HCT116 (cell line): ENCODE measurements at regions of chr1 and their contacts with region 1.

Region 1: DNA sequence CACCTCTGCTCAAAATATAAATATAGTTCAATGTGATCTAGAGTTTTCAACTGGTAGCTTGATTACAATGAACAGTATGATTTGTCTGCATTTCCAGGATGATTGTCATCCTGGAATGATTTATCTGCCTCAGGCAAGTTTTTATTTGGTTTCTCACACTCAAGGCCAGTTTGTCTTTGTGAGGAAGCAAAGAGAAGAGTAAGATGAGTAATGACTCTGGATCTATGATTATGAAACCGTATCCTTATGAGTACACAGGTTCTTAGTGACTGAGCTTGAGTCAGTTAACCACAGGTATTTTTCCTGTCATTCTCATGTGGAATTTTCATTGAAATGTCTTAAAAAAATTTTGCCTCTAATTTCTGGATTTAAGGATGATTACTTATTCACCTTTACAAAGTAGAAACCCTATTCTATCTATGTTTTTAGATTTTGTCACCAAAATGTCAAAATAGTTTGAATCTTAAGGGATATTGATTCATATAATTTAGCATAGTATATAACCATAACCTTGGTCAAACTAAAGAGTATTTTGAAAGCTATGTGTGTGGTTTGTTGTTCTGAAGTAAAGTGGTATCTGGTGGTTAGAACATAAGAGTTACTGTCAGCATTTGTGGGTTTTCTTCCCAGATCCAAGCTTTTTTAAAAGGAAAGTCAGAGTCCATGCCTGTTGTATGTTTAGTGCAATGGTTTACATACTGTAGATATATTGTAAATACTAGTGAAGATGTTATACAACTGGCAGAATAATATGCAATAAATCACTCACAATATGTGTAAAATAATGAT is 145.0 kb downstream of the RASAL2 start:
- DNase-seq: peak; percentile 98
- ATAC-seq: peak; percentile 93
- H3K4me3 ChIP-seq: peak overlapping the region in 1 of 2 experiments; percentile 40; a peak in 2 of 4 replicates
- H3K27ac ChIP-seq: peak overlapping the region; percentile 70; the same call in 1 of the 2 replicates
- H3K4me1 ChIP-seq: peaks cover 31 to 78% of the 10 kb centered on the region in 2 experiments
- H3K27me3 ChIP-seq: no peaks in the 10 kb centered on the region
- CTCF ChIP-seq: no peak
- POLR2A ChIP-seq: no peak
- RAD21 ChIP-seq: peak; percentile 29; the same call in 1 of the 2 replicates

Region 2: DNA sequence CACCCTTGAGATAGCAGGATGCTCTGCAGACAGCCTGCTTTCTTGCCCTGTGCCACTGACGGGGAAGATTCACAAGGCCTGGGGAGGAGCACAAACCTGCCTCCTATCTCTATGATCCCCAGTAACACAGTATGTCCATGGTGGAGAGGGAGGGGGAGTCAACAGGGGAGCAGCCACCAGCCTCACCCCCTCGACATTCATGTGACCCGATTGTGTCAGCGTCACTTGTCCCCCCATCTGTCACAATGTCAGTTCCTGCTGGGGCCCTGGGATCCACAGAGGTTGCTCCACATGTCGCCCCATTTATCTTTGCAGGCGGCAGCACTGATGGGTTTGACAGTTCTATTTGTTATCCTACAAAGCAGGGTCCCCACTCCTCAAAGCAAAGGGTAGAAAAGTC is 400.0 kb before region 1 on chr1:
- CTCF ChIA-PET with region 1: no interaction called
- POLR2A ChIA-PET with region 1: no interaction called
- RAD21 ChIA-PET with region 1: no interaction called
- intact Hi-C with region 1: no loop called
- DNase-seq: no peak
- ATAC-seq: no peak
- H3K4me3 ChIP-seq: no peak overlapping the region
- H3K27ac ChIP-seq: no peak overlapping the region
- H3K4me1 ChIP-seq: no peaks in the 10 kb centered on the region
- H3K27me3 ChIP-seq: peaks cover 21% of the 10 kb centered on the region
- CTCF ChIP-seq: no peak
- POLR2A ChIP-seq: no peak
- RAD21 ChIP-seq: no peak

Region 3: GRCh38 chr1:178093205-178093957 is 145.5 kb before region 1 on chr1:
- CTCF ChIA-PET with region 1: no interaction called
- POLR2A ChIA-PET with region 1: no interaction called
- RAD21 ChIA-PET with region 1: no interaction called
- intact Hi-C with region 1: loop called (anchors 5 kb)
- DNase-seq: peak; percentile 90
- ATAC-seq: peak; percentile 83
- H3K4me3 ChIP-seq: peak overlapping the region; percentile 68 to 72
- H3K27ac ChIP-seq: peak overlapping the region; percentile 75
- H3K4me1 ChIP-seq: peaks cover 12 to 29% of the 10 kb centered on the region in 2 experiments
- H3K27me3 ChIP-seq: no peaks in the 10 kb centered on the region
- CTCF ChIP-seq: peak in 2 of 3 experiments; percentile 10 to 13; a peak in 1 of 6 replicates
- POLR2A ChIP-seq: peak; percentile 41
- RAD21 ChIP-seq: peak; percentile 9; the same call in 1 of the 2 replicates

Region 4: GRCh38 chr1:178126790-178127189 is 112.1 kb before region 1 on chr1:
- CTCF ChIA-PET with region 1: no interaction called
- POLR2A ChIA-PET with region 1: no interaction called
- RAD21 ChIA-PET with region 1: no interaction called
- intact Hi-C with region 1: loop called (anchors 2 kb)
- DNase-seq: peak; percentile 69
- ATAC-seq: peak; percentile 92
- H3K4me3 ChIP-seq: peak overlapping the region in 1 of 2 experiments; percentile 27; a peak in 2 of 4 replicates
- H3K27ac ChIP-seq: peak overlapping the region; percentile 47; the same call in 1 of the 2 replicates
- H3K4me1 ChIP-seq: peaks cover 21 to 46% of the 10 kb centered on the region in 2 experiments
- H3K27me3 ChIP-seq: no peaks in the 10 kb centered on the region
- CTCF ChIP-seq: no peak
- POLR2A ChIP-seq: no peak
- RAD21 ChIP-seq: no peak

Region 5: GRCh38 chr1:178371235-178371634 is 132.3 kb after region 1 on chr1:
- CTCF ChIA-PET with region 1: no interaction called
- POLR2A ChIA-PET with region 1: no interaction called
- RAD21 ChIA-PET with region 1: no interaction called
- intact Hi-C with region 1: no loop called
- DNase-seq: no peak
- ATAC-seq: no peak
- H3K4me3 ChIP-seq: no peak overlapping the region
- H3K27ac ChIP-seq: no peak overlapping the region
- H3K4me1 ChIP-seq: peaks cover 0 to 9% of the 10 kb centered on the region in 2 experiments; a peak in 2 of 4 replicates
- H3K27me3 ChIP-seq: no peaks in the 10 kb centered on the region
- CTCF ChIP-seq: no peak
- POLR2A ChIP-seq: no peak
- RAD21 ChIP-seq: no peak